Dorsolateral prefrontal cortex (tissue), 120 donors: ENCODE measurements at regions of chr18 and their contacts with region 1.

Region 1: GRCh38 chr18:46622999-46623398 is 34.0 kb downstream of the LOXHD1 start:
- DNase-seq: no peak
- H3K4me3 ChIP-seq: no peak overlapping the region
- H3K27ac ChIP-seq: peak overlapping the region in 19 of 59 donors; percentile 13 to 76 (median 43)
- H3K27me3 ChIP-seq: no peaks in the 10 kb centered on the region
- CTCF ChIP-seq: peak in 50 of 56 donors; percentile 12 to 62 (median 40)

Region 2: GRCh38 chr18:46555724-46556123 is 67.3 kb before region 1 on chr18:
- intact Hi-C with region 1: loop called in 1 of 2 experiments (anchors 5 kb)
- DNase-seq: peak; percentile 5 to 81 (median 65)
- H3K4me3 ChIP-seq: no peak overlapping the region
- H3K27ac ChIP-seq: peak overlapping the region in 54 of 59 donors; percentile 6 to 94 (median 78)
- H3K27me3 ChIP-seq: no peaks in the 10 kb centered on the region
- CTCF ChIP-seq: peak in 54 of 56 donors; percentile 25 to 79 (median 60)